ENCODE measurements at regions of chr6 and their contacts with region 1.

Region 1: DNA sequence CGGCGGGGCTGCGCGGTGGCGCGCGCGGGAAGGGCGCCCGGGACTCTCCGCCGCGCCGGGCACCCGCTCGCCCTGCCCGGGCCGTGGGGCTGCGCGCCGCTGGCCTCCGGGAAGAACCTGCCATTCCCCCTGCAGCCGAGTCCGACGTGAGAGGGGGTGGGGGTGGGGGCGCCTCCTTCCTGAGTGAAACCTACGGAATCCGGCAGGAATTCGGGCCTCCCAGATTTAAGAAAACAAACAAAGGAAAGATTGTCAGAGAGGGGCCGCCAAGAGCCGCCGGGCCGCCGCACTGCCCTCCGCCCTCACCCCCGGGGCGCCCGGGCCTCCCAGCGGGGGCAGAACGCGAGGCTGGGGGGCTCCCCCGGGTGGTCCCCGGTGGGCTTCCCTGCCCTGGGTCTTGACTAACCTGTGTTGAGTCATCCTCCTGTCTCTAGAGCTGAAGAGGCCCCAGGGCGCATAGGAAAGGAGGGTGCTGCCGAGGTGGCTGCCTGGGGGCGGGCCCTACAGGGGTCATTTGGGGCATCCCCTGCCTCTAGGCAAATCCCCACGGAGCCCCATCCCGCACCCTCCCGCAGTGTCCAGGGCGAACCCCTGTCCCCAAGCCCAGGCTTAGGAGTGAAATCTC is 42.2 kb upstream of the FOXP4 start:
- DNase-seq: peak; percentile 69
- H3K4me3 Mint-ChIP-seq: peak overlapping the region; percentile 66
- H3K27ac Mint-ChIP-seq: no peak overlapping the region
- H3K4me1 Mint-ChIP-seq: peaks cover 16% of the 10 kb centered on the region
- H3K27me3 Mint-ChIP-seq: peaks cover 47% of the 10 kb centered on the region

Region 2: GRCh38 chr6:41167173-41167963 is 336.6 kb before region 1 on chr6:
- CTCF ChIA-PET with region 1: no interaction called
- intact Hi-C with region 1: no loop called
- DNase-seq: peak; percentile 46
- H3K4me3 Mint-ChIP-seq: no peak overlapping the region
- H3K27ac Mint-ChIP-seq: no peak overlapping the region
- H3K4me1 Mint-ChIP-seq: peaks cover 3% of the 10 kb centered on the region
- H3K27me3 Mint-ChIP-seq: no peaks in the 10 kb centered on the region

Region 3: GRCh38 chr6:41560431-41561192 is 56.7 kb after region 1 on chr6:
- CTCF ChIA-PET with region 1: no interaction called
- intact Hi-C with region 1: loop called (anchors 1 kb)
- DNase-seq: peak; percentile 94
- H3K4me3 Mint-ChIP-seq: peak overlapping the region; percentile 83
- H3K27ac Mint-ChIP-seq: peak overlapping the region; percentile 83
- H3K4me1 Mint-ChIP-seq: peaks cover 26% of the 10 kb centered on the region
- H3K27me3 Mint-ChIP-seq: no peaks in the 10 kb centered on the region

Measured in activated naive CD4-positive, alpha-beta T cell treated with anti-CD3 and anti-CD28 coated beads for 36 hours (primary cell).